Right lobe of liver (tissue), 6 donors: ENCODE measurements at regions of chr10 and their contacts with region 1.

Region 1: DNA sequence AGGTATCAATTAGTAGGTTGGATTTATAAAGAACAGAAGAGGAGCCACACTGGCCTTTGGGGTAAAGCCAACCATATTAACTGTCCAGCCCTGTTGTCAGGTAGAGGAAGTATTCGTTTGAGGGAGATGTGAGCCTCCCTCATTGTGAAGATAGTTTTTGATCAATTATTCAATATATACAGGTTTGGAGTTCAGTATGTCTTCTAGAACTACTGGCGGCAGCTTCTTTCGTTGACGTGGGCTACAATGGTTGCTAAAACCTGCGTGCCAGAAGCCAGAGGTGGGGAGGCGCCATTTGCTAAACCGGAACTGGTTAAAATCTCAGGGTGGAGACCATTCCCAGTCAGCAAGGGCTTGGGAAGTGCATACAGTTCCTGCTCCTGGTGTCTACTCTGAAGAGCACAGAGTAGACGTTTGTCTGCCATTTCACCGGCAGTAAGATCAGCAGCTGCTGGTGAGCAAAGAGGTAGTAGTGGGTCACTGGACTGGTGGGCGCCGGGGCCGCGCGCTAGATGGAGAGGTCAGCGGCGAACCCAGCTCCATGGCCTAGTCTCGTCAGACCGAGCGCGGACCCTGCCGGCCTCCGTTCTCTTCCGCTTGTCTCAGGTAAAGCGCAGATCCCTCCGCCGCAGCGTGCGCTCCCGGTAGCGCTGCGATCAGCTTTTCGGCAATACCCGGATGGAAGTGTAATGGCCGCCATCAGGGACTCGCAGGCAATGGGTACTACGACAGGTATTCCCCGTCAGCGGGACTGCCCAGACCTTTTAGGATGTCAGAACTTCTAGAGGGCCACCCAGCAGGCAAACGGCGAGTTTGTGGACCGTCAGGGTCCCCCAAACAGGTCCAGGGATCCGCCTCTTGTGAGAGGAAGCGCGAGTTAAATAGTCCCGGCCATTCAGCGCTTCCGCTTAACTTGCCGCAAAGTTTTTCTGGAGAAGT is at the start of gene ZNF518A:
- DNase-seq: peak; percentile 93 to 94 (median 94)
- ATAC-seq: peak; percentile 94 to 99 (median 95)
- H3K4me3 ChIP-seq: peak within 1 kb of the TSS; percentile 72 to 83 (median 80)
- H3K27ac ChIP-seq: peak within 1 kb of the TSS; percentile 89 to 96 (median 91)
- H3K4me1 ChIP-seq: peaks cover 0 to 15% (median 0%) of the 10 kb centered on the region in 4 donors
- H3K27me3 ChIP-seq: peaks cover 0 to 13% of the 10 kb centered on the region in 2 donors
- CTCF ChIP-seq: no peak
- POLR2A ChIP-seq: peak; percentile 38
- total RNA-seq, gene ZNF518A: 6.7 to 10.4 (median 8.8) TPM

Region 2: GRCh38 chr10:95814011-95814727 is 315.5 kb before region 1 on chr10:
- intact Hi-C with region 1: no loop called
- DNase-seq: no peak
- ATAC-seq: peak; percentile 53 to 77 (median 68)
- H3K4me3 ChIP-seq: no peak overlapping the region
- H3K27ac ChIP-seq: no peak overlapping the region
- H3K4me1 ChIP-seq: no peaks in the 10 kb centered on the region
- H3K27me3 ChIP-seq: no peaks in the 10 kb centered on the region
- CTCF ChIP-seq: no peak
- POLR2A ChIP-seq: no peak

Region 3: DNA sequence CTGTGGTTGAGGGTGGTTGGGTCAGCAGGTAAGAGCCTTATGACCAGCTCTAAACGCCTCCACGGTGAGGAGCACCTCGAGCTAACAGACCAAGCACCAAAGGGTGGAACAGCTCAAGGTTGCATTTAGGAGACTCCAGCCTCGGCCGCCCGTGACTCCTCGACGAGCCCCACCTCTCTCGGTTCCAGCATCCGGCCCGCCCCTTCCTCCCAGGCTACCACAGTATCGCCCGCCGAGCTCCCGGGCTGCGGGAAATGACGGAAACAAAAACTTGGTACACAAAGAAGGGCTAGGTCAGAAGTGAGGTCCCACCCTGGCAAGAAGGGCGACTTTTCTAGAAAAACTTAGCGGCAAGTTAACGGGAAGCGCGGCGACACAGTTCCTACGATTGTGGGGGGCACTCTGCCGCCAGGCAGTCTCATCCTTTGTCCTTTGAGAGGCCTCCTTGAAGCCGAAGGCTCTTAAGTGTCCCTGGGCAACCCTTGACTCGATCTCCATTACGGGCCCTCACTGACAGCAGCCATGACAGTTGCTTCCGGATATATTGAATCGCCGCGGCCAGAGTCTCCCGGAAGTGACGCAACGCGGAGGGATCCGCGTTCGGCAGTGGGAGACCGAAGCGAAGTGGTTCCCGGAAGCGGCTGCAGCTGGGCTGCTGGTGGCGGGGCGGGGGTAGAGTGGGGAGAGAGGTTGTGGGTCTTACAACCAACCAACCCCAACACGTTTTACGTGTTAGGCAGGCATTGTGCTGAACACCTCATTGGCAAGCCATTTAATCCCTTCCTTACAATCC is 39.8 kb before region 1 on chr10:
- intact Hi-C with region 1: loop called in 1 of 2 experiments (anchors 2 kb)
- DNase-seq: peak; percentile 88 to 93 (median 92)
- ATAC-seq: peak; percentile 94 to 95 (median 95)
- H3K4me3 ChIP-seq: peak overlapping the region; percentile 61 to 71 (median 68)
- H3K27ac ChIP-seq: peak overlapping the region; percentile 92 to 97 (median 96)
- H3K4me1 ChIP-seq: no peaks in the 10 kb centered on the region
- H3K27me3 ChIP-seq: peaks cover 0 to 5% of the 10 kb centered on the region in 2 donors
- CTCF ChIP-seq: no peak
- POLR2A ChIP-seq: peak; percentile 81